ENCODE measurements at regions of chr1 and their contacts with region 1.

Region 1: DNA sequence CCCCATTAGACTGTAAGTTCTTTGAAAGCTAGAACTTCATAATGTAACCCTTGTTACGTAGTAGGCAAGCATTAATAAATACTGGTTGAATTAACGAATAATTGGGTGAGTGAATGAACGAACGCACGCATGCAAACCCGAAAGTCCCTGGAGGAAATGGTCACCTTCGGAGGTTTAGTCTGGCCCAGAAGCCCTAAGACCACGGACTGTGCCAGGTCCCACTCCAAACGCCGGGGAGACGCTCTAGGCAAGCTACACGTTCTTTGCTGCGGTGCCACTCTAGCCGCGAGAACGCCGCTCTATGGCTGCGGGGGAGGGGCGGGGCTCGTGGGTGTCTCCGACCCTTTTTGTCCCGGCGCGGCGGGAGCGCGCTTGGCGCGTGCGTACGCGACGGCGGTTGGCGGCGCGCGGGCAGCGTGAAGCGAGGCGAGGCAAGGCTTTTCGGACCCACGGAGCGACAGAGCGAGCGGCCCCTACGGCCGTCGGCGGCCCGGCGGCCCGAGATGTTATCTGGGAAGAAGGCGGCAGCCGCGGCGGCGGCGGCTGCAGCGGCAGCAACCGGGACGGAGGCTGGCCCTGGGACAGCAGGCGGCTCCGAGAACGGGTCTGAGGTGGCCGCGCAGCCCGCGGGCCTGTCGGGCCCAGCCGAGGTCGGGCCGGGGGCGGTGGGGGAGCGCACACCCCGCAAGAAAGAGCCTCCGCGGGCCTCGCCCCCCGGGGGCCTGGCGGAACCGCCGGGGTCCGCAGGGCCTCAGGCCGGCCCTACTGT is at the start of gene KDM1A:
- DNase-seq: peak; percentile 97
- H3K4me3 Mint-ChIP-seq: peak within 1 kb of the TSS; percentile 93
- H3K27ac Mint-ChIP-seq: peak within 1 kb of the TSS; percentile 83
- H3K4me1 Mint-ChIP-seq: peaks cover 42% of the 10 kb centered on the region
- H3K27me3 Mint-ChIP-seq: no peaks in the 10 kb centered on the region
- total RNA-seq, gene KDM1A: 59.7 to 62.6 TPM

Region 2: GRCh38 chr1:22451702-22452474 is 567.4 kb before region 1 on chr1 and contains the start of gene ZBTB40:
- CTCF ChIA-PET with region 1: no interaction called
- intact Hi-C with region 1: loop called (anchors 5 kb)
- DNase-seq: peak; percentile 96
- H3K4me3 Mint-ChIP-seq: peak within 1 kb of the TSS; percentile 85
- H3K27ac Mint-ChIP-seq: peak within 1 kb of the TSS; percentile 80
- H3K4me1 Mint-ChIP-seq: peaks cover 35% of the 10 kb centered on the region
- H3K27me3 Mint-ChIP-seq: no peaks in the 10 kb centered on the region
- total RNA-seq, gene ZBTB40: 11.5 to 13.1 TPM

Region 3: GRCh38 chr1:22826604-22827580 is 192.4 kb before region 1 on chr1:
- CTCF ChIA-PET with region 1: no interaction called
- intact Hi-C with region 1: no loop called
- DNase-seq: no peak
- H3K4me3 Mint-ChIP-seq: no peak overlapping the region
- H3K27ac Mint-ChIP-seq: no peak overlapping the region
- H3K4me1 Mint-ChIP-seq: no peaks in the 10 kb centered on the region
- H3K27me3 Mint-ChIP-seq: peaks cover 4% of the 10 kb centered on the region

Region 4: GRCh38 chr1:23168457-23169194 is 149.3 kb after region 1 on chr1 and contains the start of gene LUZP1:
- CTCF ChIA-PET with region 1: no interaction called
- intact Hi-C with region 1: loop called (anchors 5 kb)
- DNase-seq: peak; percentile 93
- H3K4me3 Mint-ChIP-seq: peak within 1 kb of the TSS; percentile 98
- H3K27ac Mint-ChIP-seq: peak within 1 kb of the TSS; percentile 84
- H3K4me1 Mint-ChIP-seq: peaks cover 28% of the 10 kb centered on the region
- H3K27me3 Mint-ChIP-seq: no peaks in the 10 kb centered on the region
- total RNA-seq, gene LUZP1: 12.6 to 13.7 TPM